Aorta (tissue), 5 donors: ENCODE measurements at regions of chr11 and their contacts with region 1.

Region 1: GRCh38 chr11:102599642-102600261 is 25.4 kb downstream of the MMP20 start:
- DNase-seq: no peak
- ATAC-seq: no peak
- H3K4me3 ChIP-seq: no peak overlapping the region
- H3K27ac ChIP-seq: no peak overlapping the region
- H3K4me1 ChIP-seq: peaks cover 0 to 7% of the 10 kb centered on the region in 2 donors
- H3K27me3 ChIP-seq: no peaks in the 10 kb centered on the region

Region 2: DNA sequence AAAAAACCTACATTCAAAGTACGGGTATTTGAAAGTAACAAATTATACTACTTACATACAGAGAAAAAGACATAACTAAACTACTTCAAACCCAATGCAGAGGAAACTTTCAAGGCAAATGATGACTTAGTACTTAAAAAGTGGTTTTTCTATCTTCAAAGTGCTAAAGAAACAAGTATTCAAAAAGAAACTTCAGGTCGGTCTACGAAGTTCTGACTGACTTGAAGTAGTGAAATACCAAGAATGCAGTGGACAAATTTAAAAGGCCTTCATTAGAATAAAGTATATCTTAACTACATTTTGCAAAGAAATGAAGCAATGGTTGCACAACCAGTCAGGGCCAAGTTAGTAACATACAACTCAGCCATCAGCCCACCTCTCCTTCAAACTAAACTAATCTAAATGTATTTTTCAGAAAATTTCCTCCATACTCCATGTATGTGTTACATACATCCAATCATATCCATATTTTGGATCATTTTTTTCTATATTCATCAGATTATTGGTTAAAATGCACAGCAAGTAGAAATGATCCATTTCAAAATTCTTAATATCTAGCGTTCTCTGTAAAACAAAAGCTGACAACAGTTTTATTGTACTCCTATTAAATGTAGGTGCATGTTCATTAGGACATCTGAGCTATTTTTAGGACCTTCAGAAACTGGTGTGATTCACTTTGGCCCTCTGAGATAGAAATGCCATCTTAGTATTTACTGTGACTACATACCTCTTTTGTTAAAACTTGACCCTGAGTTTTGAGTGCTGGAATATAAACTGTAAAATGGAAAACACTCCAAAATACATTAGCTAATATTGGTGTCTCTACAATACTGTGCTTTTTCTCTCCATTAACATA is 202.8 kb before region 1 on chr11:
- intact Hi-C with region 1: no loop called
- DNase-seq: no peak
- ATAC-seq: no peak
- H3K4me3 ChIP-seq: no peak overlapping the region
- H3K27ac ChIP-seq: no peak overlapping the region
- H3K4me1 ChIP-seq: no peaks in the 10 kb centered on the region
- H3K27me3 ChIP-seq: no peaks in the 10 kb centered on the region

Region 3: DNA sequence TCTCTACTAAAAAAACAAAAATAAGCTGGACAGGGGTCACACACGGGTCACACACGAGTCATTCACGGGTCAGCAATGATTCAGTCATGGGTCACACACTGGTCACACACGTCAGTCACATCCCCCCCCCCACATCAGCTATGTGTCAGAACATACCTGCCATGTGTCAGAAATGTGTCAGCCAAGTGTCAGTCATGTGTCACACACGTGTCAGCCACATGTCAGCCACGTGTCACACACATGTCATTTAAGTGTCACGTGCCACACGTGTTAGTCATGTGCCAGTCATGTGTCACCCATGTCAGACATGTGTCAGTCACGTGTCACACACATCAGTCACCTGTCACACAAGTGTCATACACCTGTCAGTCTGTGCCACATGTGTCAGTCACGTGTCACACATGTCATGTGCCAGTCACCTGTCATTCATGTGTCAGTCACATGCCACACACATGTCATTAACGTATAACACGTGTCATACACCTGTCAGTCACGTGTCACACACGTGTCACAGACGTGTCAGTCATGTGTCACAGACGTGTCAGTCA is 54.1 kb after region 1 on chr11:
- intact Hi-C with region 1: no loop called
- DNase-seq: no peak
- ATAC-seq: no peak
- H3K4me3 ChIP-seq: no peak overlapping the region
- H3K27ac ChIP-seq: no peak overlapping the region
- H3K4me1 ChIP-seq: no peaks in the 10 kb centered on the region
- H3K27me3 ChIP-seq: no peaks in the 10 kb centered on the region

Region 4: DNA sequence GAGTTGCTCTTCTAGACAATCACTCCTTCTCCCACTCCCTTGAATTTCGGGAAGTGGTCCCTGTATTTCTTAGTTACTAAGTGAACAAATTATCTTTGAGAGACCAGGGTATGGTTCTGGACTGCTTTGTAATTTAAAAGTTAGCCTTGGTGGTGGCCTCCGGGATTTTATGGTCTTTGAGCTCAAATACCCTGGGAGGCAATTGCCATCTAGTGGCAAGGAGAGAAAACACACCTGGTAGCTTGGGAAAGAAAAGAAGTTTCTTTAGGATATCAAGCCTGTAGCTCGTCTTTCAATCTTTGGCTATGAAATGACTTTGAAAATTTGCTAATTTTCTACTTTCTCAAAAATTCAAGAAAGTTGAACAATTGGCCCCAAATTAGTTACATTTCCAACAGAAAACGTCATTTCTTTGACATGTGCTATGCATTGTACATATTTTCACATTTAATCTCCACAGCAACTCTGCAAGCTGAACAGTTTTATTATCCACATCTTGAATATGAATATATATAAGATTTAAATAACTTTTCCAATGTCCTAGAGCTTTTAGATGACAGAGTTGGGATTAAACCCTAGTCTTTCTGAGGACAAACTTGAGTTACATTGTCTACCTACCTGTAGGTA is 66.7 kb after region 1 on chr11:
- intact Hi-C with region 1: loop called in 1 of 2 experiments (anchors 5 kb)
- DNase-seq: no peak
- ATAC-seq: no peak
- H3K4me3 ChIP-seq: no peak overlapping the region
- H3K27ac ChIP-seq: no peak overlapping the region
- H3K4me1 ChIP-seq: no peaks in the 10 kb centered on the region
- H3K27me3 ChIP-seq: no peaks in the 10 kb centered on the region